ENCODE measurements at regions of chr4 and their contacts with region 1.

Region 1: GRCh38 chr4:155795991-155796390 is 37.2 kb downstream of the GUCY1B1 start:
- DNase-seq: no peak
- ATAC-seq: no peak
- H3K4me3 ChIP-seq: no peak overlapping the region
- H3K27ac ChIP-seq: no peak overlapping the region
- H3K4me1 ChIP-seq: no peaks in the 10 kb centered on the region
- H3K27me3 ChIP-seq: no peaks in the 10 kb centered on the region
- CTCF ChIP-seq: no peak

Region 2: GRCh38 chr4:155442267-155443105 is 353.5 kb before region 1 on chr4:
- intact Hi-C with region 1: loop called in 1 of 2 experiments (anchors 10 kb)
- DNase-seq: peak; percentile 76 to 88 (median 82)
- ATAC-seq: peak; percentile 99
- H3K4me3 ChIP-seq: no peak overlapping the region
- H3K27ac ChIP-seq: no peak overlapping the region
- H3K4me1 ChIP-seq: no peaks in the 10 kb centered on the region
- H3K27me3 ChIP-seq: no peaks in the 10 kb centered on the region
- CTCF ChIP-seq: peak; percentile 85 to 88

Region 3: DNA sequence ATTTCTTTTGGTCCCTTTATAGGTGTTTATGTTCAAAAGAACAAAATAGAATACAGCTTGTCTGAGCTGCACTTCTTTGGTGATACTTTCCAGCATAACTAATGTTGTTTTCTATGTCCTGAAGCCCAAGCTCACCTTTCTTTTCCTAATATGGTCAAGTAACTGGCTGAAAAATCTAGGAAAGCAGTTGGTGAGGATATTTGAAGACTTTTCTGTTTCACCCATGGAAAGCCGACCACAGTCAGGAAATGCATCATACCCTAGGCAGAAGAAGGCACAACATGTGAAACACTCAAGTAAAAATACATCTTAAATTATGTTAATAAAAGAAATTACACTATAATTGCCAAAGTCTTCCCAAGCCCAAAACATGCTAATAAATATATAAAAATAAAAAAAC is 838.6 kb after region 1 on chr4:
- intact Hi-C with region 1: no loop called
- DNase-seq: no peak
- ATAC-seq: no peak
- H3K4me3 ChIP-seq: no peak overlapping the region
- H3K27ac ChIP-seq: no peak overlapping the region
- H3K4me1 ChIP-seq: no peaks in the 10 kb centered on the region
- H3K27me3 ChIP-seq: no peaks in the 10 kb centered on the region
- CTCF ChIP-seq: no peak